Activated CD8-positive, alpha-beta memory T cell treated with anti-CD3 and anti-CD28 coated beads, Interleukin-2, amount 10 ng/mL, durations not matched to agents 7 days and 5 days (primary cell): ENCODE measurements at regions of chr9 and their contacts with region 1.

Region 1: GRCh38 chr9:5186416-5187169 is 1.2 kb upstream of the INSL6 start:
- DNase-seq: peak; percentile 76
- ATAC-seq: peak; percentile 82
- H3K4me3 Mint-ChIP-seq: no peak overlapping the region
- H3K27ac Mint-ChIP-seq: no peak overlapping the region
- H3K4me1 Mint-ChIP-seq: peaks cover 21% of the 10 kb centered on the region
- H3K27me3 Mint-ChIP-seq: no peaks in the 10 kb centered on the region

Region 2: DNA sequence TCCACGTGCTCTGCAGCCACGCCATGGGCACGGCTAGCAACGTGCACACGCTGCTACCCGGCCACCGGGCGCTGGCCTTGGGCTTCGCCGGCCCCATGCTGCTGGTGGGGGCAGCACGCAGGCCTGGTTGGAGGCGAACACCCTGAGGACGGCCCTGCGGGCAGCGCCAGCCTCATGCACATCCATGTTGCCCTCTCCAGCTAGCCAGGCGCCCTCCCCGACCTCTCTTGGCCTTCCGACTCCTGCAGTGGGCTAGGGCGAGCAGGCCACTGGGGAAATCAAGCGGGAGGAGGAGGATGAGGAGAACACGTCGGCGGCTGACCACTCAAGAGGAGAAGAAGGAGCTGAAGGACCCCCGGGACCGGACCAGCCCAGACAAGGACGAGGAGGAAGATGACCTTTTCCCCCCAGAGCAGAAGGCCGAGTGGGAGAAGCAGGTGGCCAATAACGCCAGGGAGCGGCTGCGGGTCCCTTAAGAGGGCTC is 74.4 kb before region 1 on chr9:
- CTCF ChIA-PET with region 1: no interaction called
- DNase-seq: no peak
- ATAC-seq: no peak
- H3K4me3 Mint-ChIP-seq: no peak overlapping the region
- H3K27ac Mint-ChIP-seq: no peak overlapping the region
- H3K4me1 Mint-ChIP-seq: no peaks in the 10 kb centered on the region
- H3K27me3 Mint-ChIP-seq: no peaks in the 10 kb centered on the region

Region 3: DNA sequence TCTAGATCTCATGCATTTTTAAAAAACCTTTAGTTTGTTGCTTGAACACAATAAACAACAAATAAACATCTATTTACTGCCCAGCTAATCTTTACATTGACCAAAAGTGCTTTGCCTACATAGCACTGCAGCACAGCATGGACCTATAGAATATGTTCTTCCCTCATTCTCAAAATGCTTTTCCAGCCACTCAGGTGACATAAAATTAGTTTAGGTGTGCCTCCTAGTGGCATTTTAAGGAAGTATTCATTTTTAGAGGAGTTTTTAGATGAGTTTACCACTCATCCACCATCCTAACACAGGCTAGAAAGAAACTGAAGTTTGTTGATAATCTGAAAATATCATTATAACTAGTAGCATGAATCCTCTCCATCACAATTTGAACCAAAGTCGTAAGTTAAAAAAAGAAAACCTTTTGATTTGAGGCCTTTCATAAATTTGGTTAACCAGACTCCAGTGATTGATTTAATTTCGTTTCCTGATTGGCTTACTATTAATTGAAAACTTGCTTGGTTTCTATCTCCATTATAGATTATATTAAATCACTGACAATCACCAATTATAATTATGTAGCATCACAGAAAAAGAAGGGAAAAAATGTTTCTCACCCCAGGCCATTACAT is 238.5 kb after region 1 on chr9:
- CTCF ChIA-PET with region 1: interaction called, 55 read pairs
- DNase-seq: no peak
- ATAC-seq: peak; percentile 39
- H3K4me3 Mint-ChIP-seq: no peak overlapping the region
- H3K27ac Mint-ChIP-seq: no peak overlapping the region
- H3K4me1 Mint-ChIP-seq: peaks cover 4% of the 10 kb centered on the region
- H3K27me3 Mint-ChIP-seq: no peaks in the 10 kb centered on the region